RWPE1 (cell line): ENCODE measurements at regions of chr17 and their contacts with region 1.

Region 1: GRCh38 chr17:40026816-40027613 is 11.8 kb downstream of the CSF3 start:
- DNase-seq: peak; percentile 86
- H3K27ac ChIP-seq: peak overlapping the region; percentile 99
- CTCF ChIP-seq: peak; percentile 88

Region 2: DNA sequence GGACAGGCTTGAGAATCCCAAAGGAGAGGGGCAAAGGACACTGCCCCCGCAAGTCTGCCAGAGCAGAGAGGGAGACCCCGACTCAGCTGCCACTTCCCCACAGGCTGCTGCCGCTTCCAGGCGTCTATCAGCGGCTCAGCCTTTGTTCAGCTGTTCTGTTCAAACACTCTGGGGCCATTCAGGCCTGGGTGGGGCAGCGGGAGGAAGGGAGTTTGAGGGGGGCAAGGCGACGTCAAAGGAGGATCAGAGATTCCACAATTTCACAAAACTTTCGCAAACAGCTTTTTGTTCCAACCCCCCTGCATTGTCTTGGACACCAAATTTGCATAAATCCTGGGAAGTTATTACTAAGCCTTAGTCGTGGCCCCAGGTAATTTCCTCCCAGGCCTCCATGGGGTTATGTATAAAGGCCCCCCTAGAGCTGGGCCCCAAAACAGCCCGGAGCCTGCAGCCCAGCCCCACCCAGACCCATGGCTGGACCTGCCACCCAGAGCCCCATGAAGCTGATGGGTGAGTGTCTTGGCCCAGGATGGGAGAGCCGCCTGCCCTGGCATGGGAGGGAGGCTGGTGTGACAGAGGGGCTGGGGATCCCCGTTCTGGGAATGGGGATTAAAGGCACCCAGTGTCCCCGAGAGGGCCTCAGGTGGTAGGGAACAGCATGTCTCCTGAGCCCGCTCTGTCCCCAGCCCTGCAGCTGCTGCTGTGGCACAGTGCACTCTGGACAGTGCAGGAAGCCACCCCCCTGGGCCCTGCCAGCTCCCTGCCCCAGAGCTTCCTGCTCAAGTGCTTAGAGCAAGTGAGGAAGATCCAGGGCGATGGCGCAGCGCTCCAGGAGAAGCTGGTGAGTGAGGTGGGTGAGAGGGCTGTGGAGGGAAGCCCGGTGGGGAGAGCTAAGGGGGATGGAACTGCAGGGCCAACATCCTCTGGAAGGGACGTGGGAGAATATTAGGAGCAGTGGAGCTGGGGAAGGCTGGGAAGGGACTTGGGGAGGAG is 11.7 kb before region 1 on chr17 and contains the start of gene CSF3:
- CTCF ChIA-PET with region 1: interaction called, 57 read pairs
- POLR2A ChIA-PET with region 1: interaction called, 3 read pairs
- DNase-seq: no peak
- H3K27ac ChIP-seq: peak within 1 kb of the TSS; percentile 99
- CTCF ChIP-seq: no peak